Activated B cell treated with CpG ODN at 0.5 μM for 24 hours (primary cell): ENCODE measurements at regions of chr17 and their contacts with region 1.

Region 1: GRCh38 chr17:7454980-7455379 is 10.1 kb downstream of the CHRNB1 start:
- DNase-seq: no peak
- ATAC-seq: no peak
- H3K4me3 Mint-ChIP-seq: peak overlapping the region; percentile 94
- H3K27ac Mint-ChIP-seq: peak overlapping the region; percentile 88
- H3K4me1 Mint-ChIP-seq: peaks cover 12% of the 10 kb centered on the region
- H3K27me3 Mint-ChIP-seq: peaks cover 4% of the 10 kb centered on the region
- CTCF ChIP-seq: no peak

Region 2: GRCh38 chr17:5667871-5668270 is 1787.1 kb before region 1 on chr17:
- CTCF ChIA-PET with region 1: no interaction called
- POLR2A ChIA-PET with region 1: no interaction called
- intact Hi-C with region 1: no loop called
- DNase-seq: no peak
- ATAC-seq: no peak
- H3K4me3 Mint-ChIP-seq: no peak overlapping the region
- H3K27ac Mint-ChIP-seq: no peak overlapping the region
- H3K4me1 Mint-ChIP-seq: peaks cover under 1% of the 10 kb centered on the region
- H3K27me3 Mint-ChIP-seq: peaks cover 26% of the 10 kb centered on the region
- CTCF ChIP-seq: no peak

Region 3: DNA sequence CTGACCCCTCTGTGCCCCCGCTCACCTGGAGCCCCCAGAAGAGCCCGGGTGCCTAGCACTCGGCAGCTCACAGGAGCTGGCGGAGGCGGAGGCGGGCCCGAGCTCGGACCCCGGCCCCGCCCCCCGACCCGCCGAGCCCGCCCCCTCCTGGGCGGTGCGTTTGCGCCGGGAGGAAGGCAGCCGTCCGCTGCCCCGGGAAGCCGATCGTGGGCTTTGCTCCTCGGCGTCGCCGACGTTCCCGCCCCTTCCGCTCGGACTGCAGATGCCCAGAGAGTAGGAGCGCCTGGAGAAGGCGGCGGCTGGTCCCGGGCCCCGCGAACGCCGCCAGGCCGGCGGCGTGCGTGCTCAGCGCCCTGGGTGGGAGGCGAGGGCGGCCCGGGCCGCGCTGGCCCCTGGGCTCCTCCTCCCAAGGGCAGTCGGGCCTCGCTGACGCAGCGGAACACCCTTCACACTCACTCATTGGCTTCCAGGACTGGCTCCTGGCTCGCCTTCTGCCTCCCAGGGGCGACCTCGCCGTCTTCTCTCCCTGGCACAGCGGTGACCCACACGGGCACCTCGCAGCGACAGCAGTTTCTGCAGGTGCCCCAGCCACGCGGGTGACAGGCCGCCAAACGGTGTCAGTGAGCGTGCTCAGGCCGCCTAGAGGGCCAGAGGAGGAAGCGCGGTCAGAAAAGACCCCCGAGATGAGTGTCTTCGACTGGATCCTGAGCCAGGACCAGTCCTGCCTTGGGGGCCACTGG is 60.4 kb before region 1 on chr17 and contains the start of gene PLSCR3:
- CTCF ChIA-PET with region 1: no interaction called
- POLR2A ChIA-PET with region 1: interaction called, 15 read pairs
- intact Hi-C with region 1: no loop called
- DNase-seq: peak; percentile 94
- ATAC-seq: peak; percentile 88
- H3K4me3 Mint-ChIP-seq: peak within 1 kb of the TSS; percentile 91
- H3K27ac Mint-ChIP-seq: peak within 1 kb of the TSS; percentile 85
- H3K4me1 Mint-ChIP-seq: peaks cover 15% of the 10 kb centered on the region
- H3K27me3 Mint-ChIP-seq: no peaks in the 10 kb centered on the region
- CTCF ChIP-seq: no peak
- total RNA-seq, gene PLSCR3: 31.7 and 35.2 TPM in 2 replicates

Region 4: GRCh38 chr17:7403977-7404736 is 50.8 kb before region 1 on chr17 and contains the start of gene TMEM256:
- CTCF ChIA-PET with region 1: no interaction called
- POLR2A ChIA-PET with region 1: interaction called, 17 read pairs
- intact Hi-C with region 1: loop called (anchors 1 kb)
- DNase-seq: peak; percentile 82
- ATAC-seq: peak; percentile 89
- H3K4me3 Mint-ChIP-seq: peak within 1 kb of the TSS; percentile 97
- H3K27ac Mint-ChIP-seq: peak within 1 kb of the TSS; percentile 94
- H3K4me1 Mint-ChIP-seq: peaks cover 16% of the 10 kb centered on the region
- H3K27me3 Mint-ChIP-seq: peaks cover 12% of the 10 kb centered on the region
- CTCF ChIP-seq: no peak
- total RNA-seq, gene TMEM256: 98.2 and 117 TPM in 2 replicates

Region 5: GRCh38 chr17:7414837-7415236 is 40.1 kb before region 1 on chr17:
- CTCF ChIA-PET with region 1: no interaction called
- POLR2A ChIA-PET with region 1: interaction called, 10 read pairs
- intact Hi-C with region 1: no loop called
- DNase-seq: no peak
- ATAC-seq: no peak
- H3K4me3 Mint-ChIP-seq: no peak overlapping the region
- H3K27ac Mint-ChIP-seq: no peak overlapping the region
- H3K4me1 Mint-ChIP-seq: no peaks in the 10 kb centered on the region
- H3K27me3 Mint-ChIP-seq: peaks cover 5% of the 10 kb centered on the region
- CTCF ChIP-seq: no peak

Region 6: GRCh38 chr17:7444682-7445618 is 10.0 kb before region 1 on chr17 and contains the start of gene CHRNB1:
- CTCF ChIA-PET with region 1: no interaction called
- POLR2A ChIA-PET with region 1: interaction called, 5 read pairs
- intact Hi-C with region 1: loop called (anchors 1 kb)
- DNase-seq: peak; percentile 23
- ATAC-seq: peak; percentile 32
- H3K4me3 Mint-ChIP-seq: peak within 1 kb of the TSS; percentile 78
- H3K27ac Mint-ChIP-seq: no peak within 1 kb of the TSS
- H3K4me1 Mint-ChIP-seq: peaks cover 35% of the 10 kb centered on the region
- H3K27me3 Mint-ChIP-seq: peaks cover 62% of the 10 kb centered on the region
- CTCF ChIP-seq: no peak
- total RNA-seq, gene CHRNB1: 5.9 and 6.0 TPM in 2 replicates